A673 (cell line): ENCODE measurements at regions of chr1 and their contacts with region 1.

Region 1: GRCh38 chr1:37455516-37455915 is 18.9 kb upstream of the ZC3H12A start:
- DNase-seq: no peak
- H3K4me3 ChIP-seq: no peak overlapping the region
- H3K27ac ChIP-seq: no peak overlapping the region
- H3K4me1 ChIP-seq: no peaks in the 10 kb centered on the region
- H3K27me3 ChIP-seq: no peaks in the 10 kb centered on the region
- CTCF ChIP-seq: no peak

Region 2: DNA sequence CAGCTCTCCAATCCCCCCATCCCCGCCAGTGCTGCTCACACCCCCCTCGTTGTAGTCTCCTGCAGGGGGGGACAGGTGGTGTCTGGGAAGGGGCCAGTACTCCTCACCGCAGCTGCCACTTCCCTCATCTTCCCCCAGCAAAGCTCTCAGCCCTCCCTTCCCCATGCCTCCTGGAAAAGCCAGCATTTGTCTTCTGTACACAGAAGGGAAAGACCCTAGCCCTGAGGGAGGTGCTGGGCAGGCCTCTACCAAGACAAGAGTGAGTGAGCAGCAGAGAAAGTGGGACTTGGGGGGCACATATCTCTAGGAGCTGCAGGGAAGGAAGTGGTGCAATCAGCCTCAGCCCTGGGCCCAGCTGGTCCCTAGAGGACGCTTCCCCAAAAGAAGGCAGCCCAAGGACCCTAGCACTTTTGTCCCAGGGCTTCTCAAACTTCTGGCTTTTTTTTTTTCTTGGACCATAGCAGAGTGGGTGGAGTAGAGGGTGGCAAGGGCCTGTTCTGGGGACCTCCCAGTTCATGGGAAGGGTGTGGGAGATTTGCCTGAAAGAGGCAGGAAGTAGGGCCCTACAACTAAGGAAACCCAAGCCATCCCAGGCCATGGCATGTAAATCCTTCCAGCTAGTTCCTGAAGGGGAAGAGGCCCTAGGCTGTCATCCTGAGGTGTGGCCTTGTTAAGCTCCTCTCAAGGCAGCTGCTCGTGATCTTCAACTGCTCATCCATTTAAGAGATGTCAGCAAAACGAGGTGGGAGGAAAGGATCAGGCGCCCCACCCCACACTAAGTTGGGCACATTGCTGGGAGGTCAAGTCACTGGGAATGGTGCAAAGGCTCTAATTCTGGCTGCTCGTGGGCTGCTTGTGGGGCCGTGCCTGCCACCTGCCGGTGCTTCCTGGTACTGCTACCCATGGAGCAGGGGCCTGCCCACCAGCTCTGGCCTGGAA is 31.4 kb after region 1 on chr1:
- CTCF ChIA-PET with region 1: interaction called, 7 read pairs
- POLR2A ChIA-PET with region 1: no interaction called
- intact Hi-C with region 1: loop called (anchors 1 kb)
- DNase-seq: peak; percentile 76
- H3K4me3 ChIP-seq: no peak overlapping the region
- H3K27ac ChIP-seq: peak overlapping the region; percentile 42
- H3K4me1 ChIP-seq: no peaks in the 10 kb centered on the region
- H3K27me3 ChIP-seq: no peaks in the 10 kb centered on the region
- CTCF ChIP-seq: peak; percentile 96